AG04450 (cell line): ENCODE measurements at regions of chr6 and their contacts with region 1.

Region 1: DNA sequence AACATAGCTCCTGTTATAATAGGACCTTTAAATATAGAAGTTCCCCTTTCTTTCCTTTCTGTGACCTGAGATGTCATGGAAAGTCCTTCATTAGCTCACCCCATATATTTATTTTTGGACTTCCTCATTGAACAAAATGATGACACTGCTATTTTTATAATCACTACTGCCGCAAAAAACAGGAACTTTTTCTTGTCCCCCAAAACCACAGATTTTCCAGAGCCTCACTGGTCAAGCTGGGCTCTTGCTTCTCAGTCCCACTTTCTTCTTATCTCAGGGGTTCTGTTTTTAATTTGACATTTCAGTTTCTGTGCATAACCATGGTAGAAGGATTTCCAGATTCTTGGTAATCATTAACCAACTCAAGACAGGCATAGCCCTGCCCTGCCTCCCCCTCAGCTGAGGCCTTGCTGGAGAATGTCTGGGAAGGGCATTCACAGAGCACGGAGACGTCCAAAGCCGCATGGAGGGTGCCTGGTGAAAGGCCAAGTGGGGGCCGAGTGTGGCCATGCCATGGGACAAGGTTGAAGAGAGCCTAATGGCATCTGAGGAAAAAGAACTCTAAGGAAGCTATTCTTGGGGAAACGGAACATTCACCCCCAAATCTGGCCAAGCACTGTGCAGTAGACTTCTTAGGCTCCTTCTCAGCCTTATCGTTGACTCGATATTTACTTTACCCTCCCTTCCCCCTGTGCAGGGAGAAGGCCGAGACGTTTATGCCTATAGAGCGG is 73.7 kb downstream of the EDN1 start:
- DNase-seq: no peak
- H3K4me3 ChIP-seq: no peak overlapping the region
- H3K27ac ChIP-seq: no peak overlapping the region
- H3K27me3 ChIP-seq: no peaks in the 10 kb centered on the region
- CTCF ChIP-seq: no peak

Region 2: GRCh38 chr6:12467706-12468670 is 104.2 kb after region 1 on chr6:
- CTCF ChIA-PET with region 1: interaction called, 16 read pairs
- POLR2A ChIA-PET with region 1: no interaction called
- DNase-seq: no peak
- H3K4me3 ChIP-seq: no peak overlapping the region
- H3K27ac ChIP-seq: no peak overlapping the region
- H3K27me3 ChIP-seq: no peaks in the 10 kb centered on the region
- CTCF ChIP-seq: no peak